Activated B cell treated with CpG ODN at 0.5 μM for 24 hours (primary cell): ENCODE measurements at regions of chr18 and their contacts with region 1.

Region 1: GRCh38 chr18:55781481-55781957 is 193.5 kb upstream of the TCF4 start:
- DNase-seq: no peak
- ATAC-seq: no peak
- H3K4me3 Mint-ChIP-seq: peak overlapping the region; percentile 87
- H3K27ac Mint-ChIP-seq: peak overlapping the region; percentile 97
- H3K4me1 Mint-ChIP-seq: peaks cover 33% of the 10 kb centered on the region
- H3K27me3 Mint-ChIP-seq: peaks cover 6% of the 10 kb centered on the region
- CTCF ChIP-seq: no peak

Region 2: GRCh38 chr18:55343396-55344073 is 438.0 kb before region 1 on chr18:
- CTCF ChIA-PET with region 1: interaction called, 5 read pairs
- POLR2A ChIA-PET with region 1: interaction called, 4 read pairs
- intact Hi-C with region 1: loop called (anchors 5 kb)
- DNase-seq: no peak
- ATAC-seq: peak; percentile 82
- H3K4me3 Mint-ChIP-seq: no peak overlapping the region
- H3K27ac Mint-ChIP-seq: no peak overlapping the region
- H3K4me1 Mint-ChIP-seq: peaks cover 18% of the 10 kb centered on the region
- H3K27me3 Mint-ChIP-seq: no peaks in the 10 kb centered on the region
- CTCF ChIP-seq: peak; percentile 34

Region 3: DNA sequence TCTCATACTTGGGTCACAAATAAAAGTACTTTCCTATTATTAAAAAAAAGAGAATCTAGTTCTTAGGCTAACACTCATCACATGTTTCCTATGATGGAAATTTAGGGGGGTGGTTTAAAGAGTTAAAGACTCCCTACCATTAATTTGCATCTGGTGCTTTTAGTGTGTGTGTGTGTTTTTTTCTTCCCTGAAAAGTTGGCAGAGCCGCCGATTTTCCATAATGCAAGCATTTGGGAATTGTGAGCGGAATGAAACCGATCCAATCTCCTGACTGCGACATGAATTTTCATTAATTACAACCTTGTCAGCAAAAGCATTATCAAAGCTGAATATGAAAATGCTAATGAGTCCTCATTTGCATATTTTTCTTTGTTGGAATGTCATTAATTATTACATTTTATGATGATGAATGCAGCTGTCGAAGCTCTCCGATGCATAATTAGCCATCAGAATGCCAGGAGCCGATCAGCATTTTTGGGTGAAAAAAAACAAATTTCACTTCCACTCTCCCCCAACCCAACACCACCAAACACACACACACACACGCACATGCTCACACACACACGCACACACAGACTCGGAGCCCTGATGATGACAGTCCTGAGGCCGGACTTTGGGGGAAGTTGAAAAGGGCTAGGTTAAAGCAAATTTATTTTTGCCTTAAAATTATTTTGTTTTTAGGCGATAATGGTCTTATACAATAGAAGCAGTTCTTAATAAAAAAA is 358.9 kb before region 1 on chr18:
- CTCF ChIA-PET with region 1: no interaction called
- POLR2A ChIA-PET with region 1: interaction called, 10 read pairs
- intact Hi-C with region 1: loop called (anchors 2 kb)
- DNase-seq: no peak
- ATAC-seq: no peak
- H3K4me3 Mint-ChIP-seq: peak overlapping the region; percentile 84
- H3K27ac Mint-ChIP-seq: peak overlapping the region; percentile 75
- H3K4me1 Mint-ChIP-seq: peaks cover 64% of the 10 kb centered on the region
- H3K27me3 Mint-ChIP-seq: peaks cover 2% of the 10 kb centered on the region
- CTCF ChIP-seq: no peak

Region 4: DNA sequence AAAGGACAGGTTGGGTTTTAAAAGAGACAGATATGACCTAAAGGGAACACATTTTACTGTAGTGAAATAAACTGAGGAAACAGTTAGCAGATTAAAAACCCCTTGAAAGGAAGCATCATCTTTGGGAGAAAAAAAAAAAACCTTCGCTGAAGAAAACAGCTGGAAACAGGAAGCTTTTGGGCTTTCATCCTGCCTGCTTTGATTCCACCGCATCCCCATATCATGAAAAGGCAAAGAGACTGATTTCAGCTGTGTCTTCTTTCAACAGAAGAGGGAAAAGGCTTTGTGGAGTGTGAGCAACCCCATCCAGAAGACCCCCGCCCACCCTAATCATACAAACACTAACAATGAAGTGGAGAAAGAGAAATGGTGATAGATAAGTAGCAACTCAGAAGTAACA is 279.9 kb before region 1 on chr18:
- CTCF ChIA-PET with region 1: no interaction called
- POLR2A ChIA-PET with region 1: no interaction called
- intact Hi-C with region 1: no loop called
- DNase-seq: no peak
- ATAC-seq: no peak
- H3K4me3 Mint-ChIP-seq: no peak overlapping the region
- H3K27ac Mint-ChIP-seq: no peak overlapping the region
- H3K4me1 Mint-ChIP-seq: peaks cover 25% of the 10 kb centered on the region
- H3K27me3 Mint-ChIP-seq: no peaks in the 10 kb centered on the region
- CTCF ChIP-seq: no peak

Region 5: DNA sequence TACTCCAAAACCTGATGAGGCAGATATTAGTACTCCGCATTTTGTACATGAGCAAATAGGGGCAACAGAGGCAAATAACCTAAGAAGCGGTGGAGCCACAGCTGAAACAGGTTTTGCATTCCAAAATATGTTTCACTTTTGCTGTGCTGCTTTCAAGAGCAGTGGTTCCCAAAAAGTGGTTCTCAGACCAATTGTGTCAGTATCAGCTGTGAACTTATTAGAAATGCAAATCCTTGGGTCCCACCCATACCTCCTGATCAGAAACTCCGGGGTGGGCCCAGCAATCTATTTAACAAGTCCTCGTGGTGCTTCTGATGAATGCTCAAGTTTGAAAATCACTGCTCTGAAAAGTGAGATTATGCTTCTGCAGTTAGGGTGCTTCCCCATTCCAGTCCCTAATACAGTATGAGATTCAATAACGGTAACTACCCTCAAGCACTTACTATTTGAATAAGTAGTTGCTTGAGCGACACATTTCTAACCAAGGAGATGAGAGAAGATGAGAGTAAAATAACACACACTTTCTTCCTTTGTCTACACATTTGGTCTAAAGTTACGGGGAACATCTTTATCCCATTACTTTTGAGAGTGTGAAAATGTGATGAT is 175.7 kb before region 1 on chr18:
- CTCF ChIA-PET with region 1: no interaction called
- POLR2A ChIA-PET with region 1: interaction called, 11 read pairs
- intact Hi-C with region 1: loop called (anchors 1 kb)
- DNase-seq: no peak
- ATAC-seq: peak; percentile 92
- H3K4me3 Mint-ChIP-seq: peak overlapping the region; percentile 21
- H3K27ac Mint-ChIP-seq: peak overlapping the region; percentile 76
- H3K4me1 Mint-ChIP-seq: peaks cover 31% of the 10 kb centered on the region
- H3K27me3 Mint-ChIP-seq: no peaks in the 10 kb centered on the region
- CTCF ChIP-seq: no peak

Region 6: GRCh38 chr18:55998071-55998522 is 216.6 kb after region 1 on chr18:
- CTCF ChIA-PET with region 1: no interaction called
- POLR2A ChIA-PET with region 1: no interaction called
- intact Hi-C with region 1: no loop called
- DNase-seq: no peak
- ATAC-seq: no peak
- H3K4me3 Mint-ChIP-seq: peak overlapping the region; percentile 29
- H3K27ac Mint-ChIP-seq: peak overlapping the region; percentile 10
- H3K4me1 Mint-ChIP-seq: peaks cover 19% of the 10 kb centered on the region
- H3K27me3 Mint-ChIP-seq: no peaks in the 10 kb centered on the region
- CTCF ChIP-seq: no peak

Region 7: DNA sequence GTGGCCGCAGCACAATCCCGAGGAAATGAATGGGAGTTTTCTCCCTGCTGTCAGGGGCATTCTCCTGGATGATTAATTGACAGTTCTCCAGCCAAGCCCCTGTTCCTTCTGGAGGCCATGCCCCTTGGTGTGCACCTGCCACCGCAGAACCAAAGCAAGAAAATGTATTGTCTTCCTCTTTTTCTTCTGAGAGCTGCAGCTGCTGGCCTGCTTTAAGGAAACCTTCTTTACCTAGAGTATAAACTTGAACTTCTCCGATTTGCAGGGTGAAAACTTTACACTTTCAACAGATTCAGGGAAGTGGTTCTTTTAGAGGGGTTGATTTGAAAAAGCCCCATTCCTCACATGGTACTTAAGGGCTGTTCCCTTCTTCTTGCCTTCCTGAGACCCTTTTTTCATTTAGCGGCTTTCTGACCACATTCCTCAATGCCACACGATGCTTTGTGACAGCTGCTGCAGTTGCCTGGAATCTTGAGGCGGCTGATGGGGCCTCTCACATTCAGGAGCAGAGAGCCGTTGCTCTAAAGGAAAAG is 454.0 kb after region 1 on chr18:
- CTCF ChIA-PET with region 1: no interaction called
- POLR2A ChIA-PET with region 1: interaction called, 3 read pairs
- intact Hi-C with region 1: loop called (anchors 5 kb)
- DNase-seq: peak; percentile 28
- ATAC-seq: peak; percentile 93
- H3K4me3 Mint-ChIP-seq: peak overlapping the region; percentile 52
- H3K27ac Mint-ChIP-seq: peak overlapping the region; percentile 86
- H3K4me1 Mint-ChIP-seq: peaks cover 39% of the 10 kb centered on the region
- H3K27me3 Mint-ChIP-seq: no peaks in the 10 kb centered on the region
- CTCF ChIP-seq: no peak

Region 8: DNA sequence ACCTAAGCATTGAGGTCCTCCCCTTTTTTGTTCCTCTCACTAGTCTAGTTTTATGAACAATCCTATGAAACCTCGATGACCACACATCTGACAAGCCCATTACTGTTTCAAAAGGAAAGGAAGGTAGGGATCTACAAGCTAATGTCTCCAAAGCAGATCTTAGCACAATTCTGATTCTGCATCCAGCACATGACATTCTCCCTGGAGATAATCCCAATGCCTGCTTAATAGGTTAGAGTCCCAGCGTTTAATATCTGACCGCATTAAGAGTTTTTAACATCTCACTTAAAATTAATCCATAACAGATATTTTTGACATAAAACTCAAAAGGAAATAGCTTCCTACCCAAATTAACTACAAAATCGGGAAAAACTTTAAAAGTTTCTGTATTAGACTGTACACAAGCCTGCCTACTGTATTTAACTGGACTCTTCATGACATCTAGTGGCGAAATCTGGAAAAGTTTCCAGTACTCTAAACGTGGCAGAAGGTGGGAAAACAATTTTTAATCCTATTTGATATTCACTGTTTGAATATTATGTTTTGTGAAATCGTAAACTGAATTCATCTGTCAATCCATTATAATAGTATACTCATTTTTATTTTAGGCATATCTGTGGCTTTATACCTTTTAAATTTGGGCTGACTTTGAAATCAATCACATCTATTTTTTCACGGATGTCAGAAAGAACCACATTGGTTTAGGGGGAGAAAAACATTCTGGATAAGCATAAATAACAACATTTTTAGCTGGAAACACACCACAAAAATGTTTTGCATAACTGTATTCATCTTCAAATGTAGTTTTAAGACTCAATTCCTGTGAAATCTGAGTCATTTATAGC is 794.5 kb after region 1 on chr18:
- CTCF ChIA-PET with region 1: no interaction called
- POLR2A ChIA-PET with region 1: no interaction called
- intact Hi-C with region 1: loop called (anchors 1 kb)
- DNase-seq: no peak
- ATAC-seq: peak; percentile 64
- H3K4me3 Mint-ChIP-seq: no peak overlapping the region
- H3K27ac Mint-ChIP-seq: no peak overlapping the region
- H3K4me1 Mint-ChIP-seq: no peaks in the 10 kb centered on the region
- H3K27me3 Mint-ChIP-seq: peaks cover 5% of the 10 kb centered on the region
- CTCF ChIP-seq: no peak